ENCODE measurements at regions of chr1 and their contacts with region 1.

Region 1: GRCh38 chr1:55140546-55140983 is 74.6 kb downstream of the USP24 start:
- DNase-seq: peak in 4 of 5 donors; percentile 66 to 83 (median 71)
- ATAC-seq: peak; percentile 90 to 98 (median 95)
- H3K4me3 ChIP-seq: no peak overlapping the region
- H3K27ac ChIP-seq: peak overlapping the region in 1 of 12 donors; percentile 59
- H3K4me1 ChIP-seq: peaks cover 0 to 11% (median 0%) of the 10 kb centered on the region in 12 donors
- H3K27me3 ChIP-seq: no peaks in the 10 kb centered on the region
- CTCF ChIP-seq: peak; percentile 67 to 92 (median 84)
- POLR2A ChIP-seq: no peak

Region 2: DNA sequence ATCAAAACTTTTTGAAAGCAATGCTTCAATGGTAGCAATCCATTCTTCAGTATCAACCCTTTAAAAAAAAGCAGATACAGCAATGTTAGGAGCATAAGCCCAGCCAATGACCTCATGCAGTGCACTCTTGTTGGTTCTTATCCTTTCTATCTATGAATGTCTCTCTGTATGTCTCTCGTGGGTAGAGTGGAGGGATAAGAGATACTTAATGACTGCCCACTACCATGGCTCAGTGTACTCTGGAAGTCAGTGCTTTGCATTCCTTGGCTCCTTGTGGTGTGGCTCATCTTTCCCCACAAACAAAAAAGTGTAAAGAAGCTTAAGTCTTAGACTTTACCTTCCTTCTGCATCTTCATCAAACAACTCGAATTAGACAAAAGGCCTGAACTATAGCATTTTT is 50.9 kb before region 1 on chr1:
- intact Hi-C with region 1: loop called in 1 of 10 experiments (anchors 10 kb)
- DNase-seq: no peak
- ATAC-seq: no peak
- H3K4me3 ChIP-seq: no peak overlapping the region
- H3K27ac ChIP-seq: no peak overlapping the region
- H3K4me1 ChIP-seq: peaks cover 0 to 5% (median 0%) of the 10 kb centered on the region in 12 donors
- H3K27me3 ChIP-seq: no peaks in the 10 kb centered on the region
- CTCF ChIP-seq: no peak
- POLR2A ChIP-seq: no peak

Region 3: DNA sequence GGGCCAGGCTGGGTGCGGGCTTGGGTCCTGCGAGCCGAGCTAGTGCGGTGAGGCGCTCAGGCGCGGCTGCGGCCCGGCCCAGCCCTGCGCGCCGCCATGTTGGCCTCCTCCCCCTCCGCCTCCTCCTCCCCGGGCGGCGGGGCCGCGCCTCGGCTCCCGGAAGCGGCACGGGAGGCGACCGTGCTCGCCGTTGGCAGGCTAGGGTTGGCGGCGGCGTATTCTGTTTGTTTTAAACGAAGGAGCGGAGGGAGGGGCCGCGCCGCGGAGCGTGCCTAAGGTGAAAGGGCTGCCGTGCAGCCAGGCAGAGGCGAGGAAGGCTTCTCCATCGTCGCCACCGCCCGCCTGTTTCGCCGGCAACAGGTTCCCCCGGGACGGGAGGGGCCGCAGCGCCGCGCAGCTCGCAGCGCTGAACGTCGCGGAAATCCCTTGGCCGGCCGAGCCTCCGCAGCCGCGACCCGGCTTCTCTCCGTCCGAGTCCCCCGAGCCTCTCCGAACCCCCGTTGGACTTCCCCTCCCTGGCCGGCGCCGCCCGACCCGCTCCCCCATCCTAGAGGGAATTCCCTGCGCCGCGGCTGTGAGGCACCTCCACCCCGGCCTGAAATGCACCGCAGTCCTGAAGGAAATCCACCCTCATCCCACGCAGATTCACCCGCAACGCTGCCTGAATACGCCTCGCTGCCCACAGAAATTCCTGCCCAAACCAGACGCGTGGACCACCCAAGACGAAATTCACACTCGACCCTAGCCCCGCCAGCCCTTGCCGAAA is 74.9 kb after region 1 on chr1 and contains the start of gene USP24:
- intact Hi-C with region 1: loop called in 2 of 10 experiments (anchors 5 to 10 kb)
- DNase-seq: peak; percentile 81 to 92 (median 83)
- ATAC-seq: peak; percentile 56 to 95 (median 92)
- H3K4me3 ChIP-seq: peak within 1 kb of the TSS; percentile 80 to 96 (median 90)
- H3K27ac ChIP-seq: peak within 1 kb of the TSS; percentile 95 to 99 (median 99)
- H3K4me1 ChIP-seq: peaks cover 13 to 65% (median 51%) of the 10 kb centered on the region in 12 donors
- H3K27me3 ChIP-seq: no peaks in the 10 kb centered on the region
- CTCF ChIP-seq: no peak
- POLR2A ChIP-seq: peak in 1 of 2 donors; percentile 85
- total RNA-seq, gene USP24: 26.3 to 53.7 (median 36.8) TPM

Region 4: DNA sequence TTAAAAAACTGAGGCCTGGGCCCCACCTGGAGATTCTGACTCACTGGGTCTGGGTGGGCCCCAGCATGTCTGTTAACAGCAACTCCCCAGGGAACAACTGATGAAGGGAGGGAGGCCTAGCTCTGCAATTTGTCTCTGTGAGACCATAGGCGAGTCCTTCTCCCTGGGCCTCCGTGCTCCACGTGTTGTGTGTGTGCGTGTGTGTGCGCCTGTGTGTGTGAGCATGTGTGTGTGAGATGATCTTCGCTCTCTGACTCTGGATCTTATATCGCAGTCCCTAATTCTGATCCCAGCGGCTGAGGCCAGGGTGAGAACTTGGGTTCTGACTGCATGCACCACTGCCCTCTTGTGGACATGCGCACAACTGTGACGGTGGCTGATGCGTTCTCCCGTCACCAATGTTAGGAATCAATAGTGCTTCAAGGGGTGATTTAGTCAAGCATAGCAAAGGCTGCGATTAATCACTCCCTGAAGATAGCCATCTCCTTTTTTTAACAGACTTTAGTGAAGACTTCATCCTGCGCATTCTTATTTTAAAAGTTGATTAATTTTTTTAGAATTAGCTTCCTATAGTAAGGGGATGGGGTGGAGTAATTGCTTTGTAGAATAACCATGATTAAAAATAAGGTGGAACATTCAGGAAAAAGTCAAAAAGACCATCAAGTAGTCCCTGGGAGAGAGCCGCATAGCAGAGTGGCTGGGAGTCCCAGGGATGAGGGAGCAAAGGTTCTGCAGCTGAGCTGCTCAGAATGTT is 137.0 kb after region 1 on chr1:
- intact Hi-C with region 1: loop called (anchors 1 to 2 kb)
- DNase-seq: peak; percentile 76 to 88 (median 81)
- ATAC-seq: peak; percentile 74 to 92 (median 92)
- H3K4me3 ChIP-seq: no peak overlapping the region
- H3K27ac ChIP-seq: peak overlapping the region in 2 of 12 donors; percentile 12 to 61
- H3K4me1 ChIP-seq: peaks cover 0 to 24% (median 9%) of the 10 kb centered on the region in 12 donors
- H3K27me3 ChIP-seq: no peaks in the 10 kb centered on the region
- CTCF ChIP-seq: peak; percentile 70 to 91 (median 82)
- POLR2A ChIP-seq: no peak

Region 5: DNA sequence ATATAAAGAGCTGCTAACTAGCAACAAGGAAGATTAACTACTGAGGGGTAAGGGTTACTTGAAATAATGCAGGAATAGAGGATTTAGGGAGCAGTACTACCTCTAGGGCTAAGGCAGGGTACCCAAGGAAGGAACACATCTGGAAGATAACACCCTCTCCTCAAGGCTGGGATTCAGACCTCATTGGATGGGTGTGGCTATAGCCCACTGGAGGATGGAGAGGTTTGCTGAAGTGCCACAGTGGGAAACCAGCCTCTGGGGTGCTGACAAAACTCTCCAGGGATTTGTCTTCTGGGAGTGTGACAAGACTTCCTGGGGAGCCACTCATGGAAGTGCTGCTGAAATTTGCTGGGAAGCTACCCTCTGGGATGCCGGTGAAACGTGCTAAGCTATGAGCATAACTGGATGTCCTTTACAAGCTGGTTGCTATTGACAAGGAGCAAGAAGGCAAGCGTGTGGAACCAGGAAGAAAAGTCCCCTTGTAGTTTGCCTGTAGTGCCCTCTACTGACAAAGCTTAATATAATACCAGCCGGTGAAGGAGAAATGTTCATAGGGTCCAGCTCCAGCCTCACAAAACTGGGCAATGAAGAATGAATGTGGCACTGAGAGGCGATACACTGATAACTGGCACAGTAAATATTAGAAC is 197.4 kb after region 1 on chr1:
- intact Hi-C with region 1: loop called in 2 of 10 experiments (anchors 5 to 10 kb)
- DNase-seq: no peak
- ATAC-seq: peak in 2 of 4 donors; percentile 44 to 53
- H3K4me3 ChIP-seq: no peak overlapping the region
- H3K27ac ChIP-seq: no peak overlapping the region
- H3K4me1 ChIP-seq: peaks cover 0 to 6% (median 0%) of the 10 kb centered on the region in 12 donors
- H3K27me3 ChIP-seq: no peaks in the 10 kb centered on the region
- CTCF ChIP-seq: peak in 10 of 12 donors; percentile 31 to 62 (median 46)
- POLR2A ChIP-seq: no peak

Region 6: DNA sequence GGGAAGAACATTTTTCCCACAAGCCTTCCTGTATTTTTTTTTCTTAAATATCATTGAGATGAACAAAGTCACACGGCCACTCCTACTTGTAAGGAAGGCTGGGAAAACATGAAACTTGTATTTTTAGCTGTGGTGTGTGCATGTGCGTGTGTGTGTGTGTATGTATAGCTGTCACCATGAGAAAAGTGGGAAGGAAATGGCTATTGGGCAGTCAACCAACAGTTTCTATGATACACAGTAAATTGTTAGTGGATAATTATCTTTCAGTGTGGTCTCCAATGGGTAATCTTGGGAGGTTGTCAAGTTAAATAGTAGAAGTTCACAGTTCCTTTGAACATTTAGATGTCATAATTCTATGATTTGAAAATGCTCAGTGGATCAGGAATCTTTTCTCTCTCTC is 207.3 kb after region 1 on chr1:
- intact Hi-C with region 1: loop called in 1 of 10 experiments (anchors 10 kb)
- DNase-seq: no peak
- ATAC-seq: no peak
- H3K4me3 ChIP-seq: no peak overlapping the region
- H3K27ac ChIP-seq: no peak overlapping the region
- H3K4me1 ChIP-seq: peaks cover 0 to 13% (median 2%) of the 10 kb centered on the region in 12 donors
- H3K27me3 ChIP-seq: no peaks in the 10 kb centered on the region
- CTCF ChIP-seq: no peak
- POLR2A ChIP-seq: no peak